Common myeloid progenitor, CD34-positive (primary cell): ENCODE measurements at regions of chr5 and their contacts with region 1.

Region 1: GRCh38 chr5:142713121-142713706 is 27.3 kb upstream of the FGF1 start:
- DNase-seq: peak; percentile 86 to 92 (median 92)
- H3K4me3 ChIP-seq: peak overlapping the region; percentile 36 to 83 (median 74)
- H3K27ac ChIP-seq: peak overlapping the region; percentile 10 to 62
- H3K4me1 ChIP-seq: peaks cover 0 to 16% (median 12%) of the 10 kb centered on the region in 4 experiments
- H3K27me3 ChIP-seq: no peaks in the 10 kb centered on the region

Region 2: GRCh38 chr5:142699184-142699720 is 14.0 kb before region 1 on chr5:
- CTCF ChIA-PET with region 1: interaction called, 24 read pairs
- POLR2A ChIA-PET with region 1: no interaction called
- DNase-seq: peak; percentile 74 to 88 (median 82)
- H3K4me3 ChIP-seq: no peak overlapping the region
- H3K27ac ChIP-seq: no peak overlapping the region
- H3K4me1 ChIP-seq: no peaks in the 10 kb centered on the region
- H3K27me3 ChIP-seq: no peaks in the 10 kb centered on the region

Region 3: GRCh38 chr5:142748568-142749249 is 35.5 kb after region 1 on chr5:
- CTCF ChIA-PET with region 1: interaction called, 283 read pairs
- POLR2A ChIA-PET with region 1: no interaction called
- DNase-seq: peak in 2 of 3 donors; percentile 20 to 23
- H3K4me3 ChIP-seq: no peak overlapping the region
- H3K27ac ChIP-seq: no peak overlapping the region
- H3K4me1 ChIP-seq: peaks cover 0 to 19% (median 8%) of the 10 kb centered on the region in 4 experiments
- H3K27me3 ChIP-seq: no peaks in the 10 kb centered on the region

Region 4: GRCh38 chr5:142779163-142779840 is 66.1 kb after region 1 on chr5:
- CTCF ChIA-PET with region 1: interaction called, 10 read pairs
- POLR2A ChIA-PET with region 1: no interaction called
- DNase-seq: no peak
- H3K4me3 ChIP-seq: no peak overlapping the region
- H3K27ac ChIP-seq: no peak overlapping the region
- H3K4me1 ChIP-seq: peaks cover 2 to 36% (median 9%) of the 10 kb centered on the region in 4 experiments
- H3K27me3 ChIP-seq: no peaks in the 10 kb centered on the region

Region 5: GRCh38 chr5:142888469-142889085 is 175.4 kb after region 1 on chr5:
- CTCF ChIA-PET with region 1: interaction called, 1,011 read pairs
- POLR2A ChIA-PET with region 1: no interaction called
- DNase-seq: peak; percentile 36 to 53 (median 39)
- H3K4me3 ChIP-seq: no peak overlapping the region
- H3K27ac ChIP-seq: no peak overlapping the region
- H3K4me1 ChIP-seq: no peaks in the 10 kb centered on the region
- H3K27me3 ChIP-seq: no peaks in the 10 kb centered on the region